Adrenal gland (tissue), 19 donors: ENCODE measurements at regions of chr19 and their contacts with region 1.

Region 1: DNA sequence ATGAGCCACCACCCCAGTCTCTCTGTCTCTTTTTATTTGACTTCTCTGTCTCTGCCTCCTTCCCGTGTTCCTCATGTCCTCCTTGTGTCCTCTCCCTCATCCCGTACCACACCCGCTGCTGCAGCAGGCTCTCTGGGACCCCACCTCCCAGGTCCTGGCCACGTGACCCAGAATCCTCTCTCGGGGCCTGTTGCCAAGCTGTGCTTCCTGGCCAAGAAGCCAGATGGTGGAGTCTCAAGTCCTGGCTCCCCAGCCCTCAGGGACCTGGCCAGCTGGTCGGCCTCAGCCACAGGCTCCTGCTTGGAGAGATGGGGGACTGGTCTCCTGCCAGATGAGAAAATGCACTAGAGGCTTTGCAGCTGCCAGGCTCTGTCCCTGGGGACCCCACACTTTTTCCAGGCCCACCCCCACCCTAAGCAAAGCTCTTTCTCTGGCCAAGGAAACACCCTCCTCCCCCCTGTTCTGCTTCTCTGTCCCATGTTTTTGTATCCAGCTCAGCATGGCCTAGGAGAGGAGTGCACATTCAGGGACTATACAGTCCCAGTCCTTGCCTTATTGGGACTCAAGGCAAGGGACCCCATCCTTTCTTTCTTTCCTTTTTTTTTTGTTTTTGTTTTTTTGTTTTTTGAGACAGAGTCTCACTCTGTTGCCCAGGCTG is 34.3 kb upstream of the SHKBP1 start:
- DNase-seq: peak in 6 of 7 donors; percentile 19 to 80 (median 52)
- H3K4me3 ChIP-seq: no peak overlapping the region
- H3K27ac ChIP-seq: no peak overlapping the region
- H3K4me1 ChIP-seq: no peaks in the 10 kb centered on the region
- H3K27me3 ChIP-seq: no peaks in the 10 kb centered on the region
- CTCF ChIP-seq: no peak
- POLR2A ChIP-seq: no peak

Region 2: GRCh38 chr19:40489882-40490230 is 52.5 kb before region 1 on chr19:
- intact Hi-C with region 1: no loop called
- DNase-seq: no peak
- H3K4me3 ChIP-seq: no peak overlapping the region
- H3K27ac ChIP-seq: no peak overlapping the region
- H3K4me1 ChIP-seq: no peaks in the 10 kb centered on the region
- H3K27me3 ChIP-seq: no peaks in the 10 kb centered on the region
- CTCF ChIP-seq: no peak
- POLR2A ChIP-seq: no peak

Region 3: GRCh38 chr19:40501599-40501998 is 40.7 kb before region 1 on chr19:
- intact Hi-C with region 1: no loop called
- DNase-seq: no peak
- H3K4me3 ChIP-seq: no peak overlapping the region
- H3K27ac ChIP-seq: no peak overlapping the region
- H3K4me1 ChIP-seq: no peaks in the 10 kb centered on the region
- H3K27me3 ChIP-seq: no peaks in the 10 kb centered on the region
- CTCF ChIP-seq: no peak
- POLR2A ChIP-seq: no peak

Region 4: DNA sequence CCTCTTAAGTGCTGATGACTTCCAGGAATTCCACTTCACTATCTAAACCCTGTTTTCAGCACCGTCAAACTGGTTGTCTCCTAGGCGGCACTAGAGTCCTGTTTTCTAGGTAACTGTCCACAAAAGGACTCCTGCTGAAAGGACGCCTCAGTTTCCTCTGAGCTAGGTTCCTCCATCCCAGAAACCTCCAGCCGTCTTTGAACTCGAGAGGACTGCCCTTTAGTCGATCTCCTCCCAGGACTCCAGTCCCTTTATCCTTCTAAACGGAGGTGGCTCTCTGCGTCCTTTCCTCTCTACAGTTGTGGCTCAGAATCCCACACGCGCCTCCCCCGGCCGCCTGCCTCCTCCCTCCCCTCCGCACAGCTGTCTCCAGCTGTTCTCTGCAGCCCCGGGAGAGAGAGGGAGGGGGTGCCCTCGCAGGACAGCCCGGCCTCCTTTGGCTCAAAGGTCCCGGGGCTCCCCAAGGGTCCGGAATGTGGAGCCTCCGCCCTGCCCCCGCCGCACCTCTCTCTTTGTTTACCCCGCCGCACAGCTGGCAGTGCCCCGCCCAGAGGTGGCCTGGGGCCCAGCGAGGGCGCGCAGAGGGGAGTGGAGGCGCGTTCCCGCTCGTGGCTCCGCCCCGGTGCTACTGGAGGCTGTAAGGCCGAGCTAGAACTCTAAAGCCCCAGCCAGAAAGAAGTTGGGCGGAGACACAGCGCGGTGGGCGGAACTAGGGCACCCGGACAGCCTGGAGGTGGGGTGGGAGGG is 61.2 kb after region 1 on chr19:
- intact Hi-C with region 1: loop called in 1 of 2 experiments (anchors 5 kb)
- DNase-seq: peak; percentile 95 to 99 (median 98)
- H3K4me3 ChIP-seq: peak overlapping the region in 2 of 4 donors; percentile 30 to 50
- H3K27ac ChIP-seq: peak overlapping the region in 4 of 5 donors; percentile 2 to 86 (median 52)
- H3K4me1 ChIP-seq: peaks cover 37 to 53% of the 10 kb centered on the region in 2 donors
- H3K27me3 ChIP-seq: peaks cover 11% of the 10 kb centered on the region
- CTCF ChIP-seq: no peak
- POLR2A ChIP-seq: peak in 1 of 2 donors; percentile 81